A673 (cell line): ENCODE measurements at regions of chr14 and their contacts with region 1.

Region 1: GRCh38 chr14:69924201-69924600 is 45.0 kb downstream of the SMOC1 start:
- DNase-seq: no peak
- H3K4me3 ChIP-seq: no peak overlapping the region
- H3K27ac ChIP-seq: no peak overlapping the region
- H3K4me1 ChIP-seq: no peaks in the 10 kb centered on the region
- H3K27me3 ChIP-seq: peaks cover 50% of the 10 kb centered on the region
- CTCF ChIP-seq: no peak

Region 2: DNA sequence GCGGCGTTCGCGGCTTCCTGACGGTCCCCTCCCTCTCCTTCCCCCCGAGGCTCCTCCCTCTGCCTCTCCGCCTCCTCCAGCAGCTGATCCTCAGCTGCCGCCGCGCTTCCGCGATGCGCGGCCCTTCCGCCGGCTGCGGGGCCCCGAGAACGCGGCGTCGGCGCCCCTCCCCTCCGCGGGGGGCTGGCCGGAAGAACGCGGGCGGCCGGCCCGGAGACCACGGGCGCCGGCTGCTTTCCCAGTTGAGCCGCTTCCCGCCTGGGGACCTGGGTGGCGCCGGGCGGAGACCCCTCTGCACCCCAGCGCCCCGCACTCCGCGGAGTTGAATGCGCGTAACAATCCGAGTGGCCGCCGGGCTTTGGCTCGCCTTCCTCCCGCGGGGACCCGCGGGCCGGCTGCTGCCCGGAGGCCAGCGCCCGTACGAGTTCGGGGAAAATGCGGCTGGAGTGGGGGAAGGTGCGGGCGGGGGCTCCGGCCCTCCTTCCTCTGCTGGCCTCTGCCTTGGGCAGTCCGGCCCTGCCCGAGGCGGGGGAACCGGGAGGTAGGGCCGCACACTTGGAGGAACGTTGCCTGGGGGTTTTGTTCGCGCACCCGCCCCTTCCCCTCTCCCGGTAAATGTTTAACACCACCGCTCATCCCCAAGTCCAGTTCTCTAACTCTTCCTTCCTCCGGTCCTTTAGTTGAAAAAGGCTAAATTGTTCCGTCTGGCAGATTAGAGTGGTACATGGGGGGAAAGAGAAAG is 770.9 kb before region 1 on chr14:
- CTCF ChIA-PET with region 1: no interaction called
- POLR2A ChIA-PET with region 1: interaction called, 13 read pairs
- intact Hi-C with region 1: no loop called
- DNase-seq: peak; percentile 94
- H3K4me3 ChIP-seq: peak overlapping the region; percentile 70
- H3K27ac ChIP-seq: peak overlapping the region; percentile 88
- H3K4me1 ChIP-seq: no peaks in the 10 kb centered on the region
- H3K27me3 ChIP-seq: peaks cover 19% of the 10 kb centered on the region
- CTCF ChIP-seq: no peak

Region 3: DNA sequence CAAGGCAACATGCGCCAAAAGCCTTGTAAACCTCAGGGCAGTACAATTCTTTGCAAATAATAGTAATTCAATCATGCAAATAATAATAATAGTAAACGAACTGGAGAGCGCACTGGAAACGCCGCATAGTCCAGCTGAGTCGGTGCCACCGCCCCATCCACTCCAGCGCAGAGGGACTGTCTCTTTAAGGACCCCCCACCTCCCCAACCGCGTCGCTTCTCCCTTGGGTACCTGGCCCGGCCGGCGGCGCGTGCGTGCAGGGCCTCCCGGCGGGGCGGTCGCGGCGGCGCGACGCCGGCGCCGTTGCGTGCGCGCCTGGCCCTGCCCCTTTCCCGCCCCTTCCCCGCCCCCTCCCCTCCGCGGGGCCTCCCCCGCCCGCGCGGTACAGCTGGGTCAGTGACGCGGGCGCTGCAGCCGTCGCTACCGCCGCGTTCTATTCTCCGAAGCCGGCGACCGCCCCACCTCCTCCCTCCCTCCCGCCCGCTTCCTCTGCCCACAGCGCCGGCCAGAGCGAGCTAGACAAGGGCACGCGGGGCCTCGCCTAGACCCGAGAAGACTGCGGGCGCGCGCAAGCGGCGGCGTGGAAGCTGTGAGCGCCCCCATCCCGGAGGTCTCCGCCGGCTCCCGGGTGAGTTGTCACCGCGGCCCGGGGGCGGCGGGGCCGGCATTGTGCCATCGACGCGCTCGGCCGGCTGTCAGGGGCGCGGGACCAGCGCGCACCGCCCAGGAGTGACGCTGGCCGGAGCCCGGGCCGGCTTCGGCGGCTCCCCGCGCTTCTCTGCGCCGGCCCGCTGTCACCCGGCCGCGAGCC is 312.8 kb before region 1 on chr14 and contains the start of gene SUSD6:
- CTCF ChIA-PET with region 1: no interaction called
- POLR2A ChIA-PET with region 1: no interaction called
- intact Hi-C with region 1: no loop called
- DNase-seq: peak; percentile 94
- H3K4me3 ChIP-seq: peak within 1 kb of the TSS; percentile 60
- H3K27ac ChIP-seq: peak within 1 kb of the TSS; percentile 70
- H3K4me1 ChIP-seq: peaks cover 23% of the 10 kb centered on the region
- H3K27me3 ChIP-seq: no peaks in the 10 kb centered on the region
- CTCF ChIP-seq: no peak
- total RNA-seq, gene SUSD6: 9.2 and 13.1 TPM in 2 replicates